GM12878 (cell line): ENCODE measurements at regions of chr2 and their contacts with region 1.

Region 1: GRCh38 chr2:143110758-143111428 is 18.3 kb upstream of the ARHGAP15 start:
- DNase-seq: peak; percentile 62
- ATAC-seq: peak; percentile 98
- H3K4me3 ChIP-seq: no peak overlapping the region
- H3K27ac ChIP-seq: no peak overlapping the region
- H3K4me1 ChIP-seq: no peaks in the 10 kb centered on the region
- H3K27me3 ChIP-seq: no peaks in the 10 kb centered on the region
- CTCF ChIP-seq: peak; percentile 55 to 79 (median 67)
- EP300 ChIP-seq: no peak
- POLR2A ChIP-seq: no peak
- RAD21 ChIP-seq: peak; percentile 97

Region 2: GRCh38 chr2:143128681-143129580 is 18.0 kb after region 1 on chr2 and contains the start of gene ARHGAP15:
- CTCF ChIA-PET with region 1: interaction called, 54 read pairs
- POLR2A ChIA-PET with region 1: interaction called, 5 read pairs
- RAD21 ChIA-PET with region 1: interaction called, 55 read pairs
- SMC1A ChIA-PET with region 1: interaction called, 43 read pairs
- in situ Hi-C with region 1: no loop called
- intact Hi-C with region 1: no loop called
- DNase-seq: peak; percentile 85
- ATAC-seq: peak; percentile 86
- H3K4me3 ChIP-seq: peak within 1 kb of the TSS; percentile 74
- H3K27ac ChIP-seq: peak within 1 kb of the TSS; percentile 88
- H3K4me1 ChIP-seq: peaks cover 10% of the 10 kb centered on the region
- H3K27me3 ChIP-seq: no peaks in the 10 kb centered on the region
- CTCF ChIP-seq: no peak
- EP300 ChIP-seq: peak; percentile 44 to 71; a peak in 3 of 4 replicates
- POLR2A ChIP-seq: peak; percentile 85
- RAD21 ChIP-seq: no peak
- polyA plus RNA-seq, gene ARHGAP15: 66.6 to 69.9 TPM

Region 3: DNA sequence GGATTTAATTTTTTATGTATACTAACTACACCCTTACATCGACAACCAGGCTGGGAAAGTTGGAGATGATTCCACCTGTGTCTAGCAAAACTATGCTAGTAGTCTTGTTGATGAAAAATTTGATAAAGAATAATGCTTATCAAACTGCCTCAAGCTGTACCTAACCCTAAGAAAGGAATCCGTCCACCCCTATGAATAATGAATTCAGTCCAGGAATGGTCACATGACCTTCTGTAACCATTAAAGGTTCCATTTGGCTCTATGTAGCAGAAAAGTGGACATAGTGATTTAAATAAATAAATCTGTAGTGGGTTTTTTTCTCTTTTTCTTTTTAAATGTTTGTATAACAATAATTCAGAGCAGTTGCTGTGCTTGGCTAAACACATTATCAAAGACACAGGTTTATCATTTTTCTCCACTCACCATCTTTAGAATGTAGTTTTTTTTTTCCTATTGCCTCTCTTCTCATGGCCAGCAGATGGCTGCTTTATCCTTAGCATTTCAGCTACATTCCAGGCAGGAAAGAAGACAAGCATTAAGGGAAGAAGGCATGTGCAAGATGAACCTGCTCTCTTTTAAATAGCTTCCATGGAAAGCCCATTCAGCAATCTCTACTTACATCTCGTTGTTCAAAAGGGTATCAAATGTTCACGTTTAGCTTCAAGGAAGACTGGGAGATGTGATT is 60.8 kb after region 1 on chr2:
- CTCF ChIA-PET with region 1: interaction called, 6 read pairs
- POLR2A ChIA-PET with region 1: no interaction called
- RAD21 ChIA-PET with region 1: interaction called, 7 read pairs
- SMC1A ChIA-PET with region 1: interaction called, 31 read pairs
- in situ Hi-C with region 1: no loop called
- intact Hi-C with region 1: no loop called
- DNase-seq: no peak
- ATAC-seq: no peak
- H3K4me3 ChIP-seq: no peak overlapping the region
- H3K27ac ChIP-seq: no peak overlapping the region
- H3K4me1 ChIP-seq: peaks cover 7% of the 10 kb centered on the region; the same call in 1 of the 2 replicates
- H3K27me3 ChIP-seq: no peaks in the 10 kb centered on the region
- CTCF ChIP-seq: no peak
- EP300 ChIP-seq: no peak
- POLR2A ChIP-seq: no peak
- RAD21 ChIP-seq: no peak

Region 4: GRCh38 chr2:143205106-143205764 is 94.3 kb after region 1 on chr2:
- CTCF ChIA-PET with region 1: interaction called, 22 read pairs
- POLR2A ChIA-PET with region 1: no interaction called
- RAD21 ChIA-PET with region 1: interaction called, 3 read pairs
- SMC1A ChIA-PET with region 1: interaction called, 20 read pairs
- in situ Hi-C with region 1: no loop called
- intact Hi-C with region 1: no loop called
- DNase-seq: no peak
- ATAC-seq: peak; percentile 81
- H3K4me3 ChIP-seq: no peak overlapping the region
- H3K27ac ChIP-seq: no peak overlapping the region
- H3K4me1 ChIP-seq: no peaks in the 10 kb centered on the region
- H3K27me3 ChIP-seq: no peaks in the 10 kb centered on the region
- CTCF ChIP-seq: peak in 1 of 3 experiments; percentile 43; a peak in 3 of 6 replicates
- EP300 ChIP-seq: no peak
- POLR2A ChIP-seq: no peak
- RAD21 ChIP-seq: 0 out of 2 replicates have a peak, but pooled peaks have one; percentile 3

Region 5: DNA sequence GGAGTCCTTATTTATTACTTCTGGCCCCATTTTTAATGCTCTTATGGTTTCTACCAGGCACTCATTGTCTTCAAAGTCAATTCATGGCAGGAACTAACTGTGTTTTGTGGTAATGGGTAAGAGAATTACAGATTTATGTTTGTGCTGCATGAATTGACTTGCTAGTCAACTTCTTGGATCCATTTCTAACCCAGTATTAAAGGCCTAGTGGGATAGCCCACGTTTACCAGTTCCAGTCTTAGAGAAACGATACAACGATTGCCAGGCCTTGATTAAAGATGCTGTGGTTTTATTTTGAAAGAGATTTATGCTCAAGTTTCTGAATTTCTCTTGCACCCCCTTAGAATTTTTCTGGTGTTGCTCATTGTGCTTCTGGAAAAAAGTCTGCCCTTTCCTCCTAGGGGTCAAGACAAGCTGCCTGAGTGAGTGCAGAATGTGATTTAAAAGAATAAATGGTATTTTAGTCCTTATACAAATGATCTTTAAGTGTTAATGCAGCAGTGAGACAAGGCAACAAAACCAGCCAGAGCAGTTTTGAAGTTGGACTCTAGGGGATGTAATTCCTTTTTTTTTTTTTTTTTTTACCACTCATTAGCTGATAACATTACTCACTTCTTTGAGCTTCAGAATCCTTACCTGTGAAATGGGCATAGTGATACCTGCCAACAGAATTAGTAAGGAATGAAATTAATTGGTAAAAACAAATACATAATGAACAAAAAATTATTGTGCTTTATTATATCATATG is 119.8 kb after region 1 on chr2:
- CTCF ChIA-PET with region 1: interaction called, 228 read pairs
- POLR2A ChIA-PET with region 1: interaction called, 3 read pairs
- RAD21 ChIA-PET with region 1: interaction called, 8 read pairs
- SMC1A ChIA-PET with region 1: interaction called, 194 read pairs
- in situ Hi-C with region 1: no loop called
- intact Hi-C with region 1: no loop called
- DNase-seq: no peak
- ATAC-seq: no peak
- H3K4me3 ChIP-seq: no peak overlapping the region
- H3K27ac ChIP-seq: no peak overlapping the region
- H3K4me1 ChIP-seq: no peaks in the 10 kb centered on the region
- H3K27me3 ChIP-seq: no peaks in the 10 kb centered on the region
- CTCF ChIP-seq: no peak
- EP300 ChIP-seq: no peak
- POLR2A ChIP-seq: no peak
- RAD21 ChIP-seq: no peak

Region 6: GRCh38 chr2:143284087-143284675 is 173.3 kb after region 1 on chr2:
- CTCF ChIA-PET with region 1: interaction called, 100 read pairs
- POLR2A ChIA-PET with region 1: no interaction called
- RAD21 ChIA-PET with region 1: interaction called, 11 read pairs
- SMC1A ChIA-PET with region 1: interaction called, 27 read pairs
- in situ Hi-C with region 1: no loop called
- intact Hi-C with region 1: no loop called
- DNase-seq: no peak
- ATAC-seq: peak; percentile 88
- H3K4me3 ChIP-seq: no peak overlapping the region
- H3K27ac ChIP-seq: no peak overlapping the region
- H3K4me1 ChIP-seq: no peaks in the 10 kb centered on the region
- H3K27me3 ChIP-seq: no peaks in the 10 kb centered on the region
- CTCF ChIP-seq: peak; percentile 57 to 85 (median 77)
- EP300 ChIP-seq: no peak
- POLR2A ChIP-seq: no peak
- RAD21 ChIP-seq: peak; percentile 35; the same call in 1 of the 2 replicates